CD4-positive, alpha-beta T cell (primary cell): ENCODE measurements at regions of chr9 and their contacts with region 1.

Region 1: DNA sequence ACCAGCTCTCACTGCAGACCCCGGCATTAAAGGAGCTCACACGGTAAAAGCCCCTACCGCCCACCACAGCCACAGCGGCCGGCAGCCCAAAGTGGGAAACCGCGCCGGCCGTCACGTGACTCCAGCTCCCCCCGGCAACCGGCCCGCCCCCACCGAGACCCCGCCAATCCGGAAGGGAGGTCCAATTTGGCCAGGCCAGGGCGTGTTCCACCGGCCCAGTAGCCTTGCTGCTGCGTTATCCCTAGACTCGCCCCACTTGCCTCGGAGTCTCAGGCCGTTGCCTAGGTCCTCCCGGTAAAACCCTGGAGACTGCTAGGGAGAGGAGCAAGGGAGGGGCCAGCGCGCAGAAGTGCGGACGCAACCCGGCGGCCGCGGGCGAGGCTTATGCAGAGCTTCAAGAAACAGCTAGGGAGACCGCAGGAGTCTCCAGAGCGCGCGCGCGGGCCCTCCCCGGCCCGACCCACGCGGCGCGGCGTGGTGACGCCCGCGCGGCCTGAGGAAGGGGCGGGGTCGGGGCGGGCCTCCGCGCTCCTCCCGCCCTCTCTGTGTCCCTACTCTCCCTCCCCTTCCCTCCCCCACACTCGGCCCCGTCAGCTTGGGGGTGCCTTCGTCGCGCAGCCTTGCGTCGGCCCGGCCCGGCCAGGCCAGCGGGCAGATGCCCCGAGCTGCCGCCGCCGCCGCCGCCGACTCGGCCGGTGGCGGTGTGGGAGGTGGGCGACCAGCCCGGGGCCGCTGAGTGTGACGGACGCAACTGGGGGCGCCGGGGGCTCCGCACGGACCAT is at the start of gene RIC1:
- DNase-seq: peak; percentile 74 to 96 (median 86)
- ATAC-seq: peak; percentile 79
- H3K4me3 ChIP-seq: peak within 1 kb of the TSS; percentile 88
- H3K4me3 Mint-ChIP-seq: peak within 1 kb of the TSS; percentile 99
- H3K27ac ChIP-seq: peak within 1 kb of the TSS; percentile 85
- H3K27ac Mint-ChIP-seq: peak within 1 kb of the TSS; percentile 97
- H3K4me1 ChIP-seq: peaks cover 42% of the 10 kb centered on the region
- H3K4me1 Mint-ChIP-seq: peaks cover 66% of the 10 kb centered on the region
- H3K27me3 ChIP-seq: no peaks in the 10 kb centered on the region
- H3K27me3 Mint-ChIP-seq: no peaks in the 10 kb centered on the region
- CTCF ChIP-seq: no peak
- total RNA-seq, gene RIC1: 24.7 to 26.3 TPM

Region 2: DNA sequence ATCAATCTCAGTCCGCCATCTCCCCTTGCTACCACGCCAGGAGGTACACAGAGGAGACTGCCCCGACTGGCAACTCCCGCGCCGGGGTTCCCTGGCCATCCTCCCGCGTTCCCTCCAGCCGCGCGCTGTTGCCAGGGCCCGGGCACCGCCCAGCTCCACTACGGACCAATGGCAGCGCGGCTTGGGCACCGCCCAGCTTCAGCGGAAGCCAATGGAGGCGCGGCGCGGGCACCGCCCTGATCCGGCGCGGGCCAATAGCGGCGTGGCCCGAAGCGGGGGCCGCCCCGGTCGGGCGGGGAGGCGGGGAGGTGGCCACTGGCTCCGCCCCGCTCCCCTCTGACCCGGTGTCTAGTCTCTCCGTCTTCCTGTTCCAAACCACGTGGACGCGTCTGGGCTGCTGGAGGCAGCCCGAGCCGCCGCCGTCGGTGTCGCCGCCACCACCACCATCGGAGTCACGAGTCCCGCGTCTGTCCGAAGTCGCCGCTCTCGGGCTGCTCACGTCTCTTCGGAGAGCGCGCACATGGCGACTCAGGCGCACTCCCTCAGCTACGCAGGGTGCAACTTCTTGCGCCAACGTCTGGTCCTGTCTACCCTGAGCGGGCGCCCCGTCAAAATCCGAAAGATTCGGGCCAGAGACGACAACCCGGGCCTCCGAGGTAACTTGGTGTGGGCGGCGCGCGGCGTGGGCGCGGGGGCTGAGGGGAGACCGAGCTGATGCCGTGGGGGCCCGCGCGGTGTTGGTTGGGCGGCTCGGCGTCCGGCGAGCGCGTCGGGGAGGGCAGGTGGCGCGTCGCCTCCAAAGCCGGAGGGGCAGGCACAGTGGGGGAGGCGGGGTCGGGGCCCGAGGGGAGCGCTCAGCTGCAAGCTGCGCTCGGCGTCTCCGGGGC is 835.9 kb before region 1 on chr9 and contains the start of gene RCL1:
- CTCF ChIA-PET with region 1: no interaction called
- POLR2A ChIA-PET with region 1: interaction called, 14 read pairs
- intact Hi-C with region 1: loop called in 1 of 2 experiments (anchors 5 kb)
- DNase-seq: peak; percentile 89 to 98 (median 94)
- ATAC-seq: peak; percentile 89
- H3K4me3 ChIP-seq: peak within 1 kb of the TSS; percentile 87
- H3K4me3 Mint-ChIP-seq: peak within 1 kb of the TSS; percentile 97
- H3K27ac ChIP-seq: peak within 1 kb of the TSS; percentile 83 to 87
- H3K27ac Mint-ChIP-seq: peak within 1 kb of the TSS; percentile 92
- H3K4me1 ChIP-seq: peaks cover 25% of the 10 kb centered on the region
- H3K4me1 Mint-ChIP-seq: peaks cover 45% of the 10 kb centered on the region
- H3K27me3 ChIP-seq: no peaks in the 10 kb centered on the region
- H3K27me3 Mint-ChIP-seq: no peaks in the 10 kb centered on the region
- CTCF ChIP-seq: no peak
- total RNA-seq, gene RCL1: 33.8 to 35.5 TPM

Region 3: GRCh38 chr9:5557606-5558587 is 70.8 kb before region 1 on chr9:
- CTCF ChIA-PET with region 1: no interaction called
- POLR2A ChIA-PET with region 1: interaction called, 26 read pairs
- intact Hi-C with region 1: no loop called
- DNase-seq: peak; percentile 28 to 86 (median 46)
- ATAC-seq: peak; percentile 97
- H3K4me3 ChIP-seq: no peak overlapping the region
- H3K4me3 Mint-ChIP-seq: peak overlapping the region; percentile 76
- H3K27ac ChIP-seq: peak overlapping the region; percentile 67 to 81
- H3K27ac Mint-ChIP-seq: peak overlapping the region; percentile 94
- H3K4me1 ChIP-seq: peaks cover 43% of the 10 kb centered on the region
- H3K4me1 Mint-ChIP-seq: peaks cover 66% of the 10 kb centered on the region
- H3K27me3 ChIP-seq: no peaks in the 10 kb centered on the region
- H3K27me3 Mint-ChIP-seq: no peaks in the 10 kb centered on the region
- CTCF ChIP-seq: no peak

Region 4: GRCh38 chr9:5608298-5609225 is 20.2 kb before region 1 on chr9:
- CTCF ChIA-PET with region 1: no interaction called
- POLR2A ChIA-PET with region 1: interaction called, 28 read pairs
- intact Hi-C with region 1: no loop called
- DNase-seq: peak in 3 of 14 experiments; percentile 17 to 26 (median 18)
- ATAC-seq: peak; percentile 62
- H3K4me3 ChIP-seq: peak overlapping the region; percentile 42
- H3K4me3 Mint-ChIP-seq: peak overlapping the region; percentile 83
- H3K27ac ChIP-seq: no peak overlapping the region
- H3K27ac Mint-ChIP-seq: peak overlapping the region; percentile 71
- H3K4me1 ChIP-seq: peaks cover 4% of the 10 kb centered on the region
- H3K4me1 Mint-ChIP-seq: peaks cover 39% of the 10 kb centered on the region
- H3K27me3 ChIP-seq: no peaks in the 10 kb centered on the region
- H3K27me3 Mint-ChIP-seq: no peaks in the 10 kb centered on the region
- CTCF ChIP-seq: no peak

Region 5: DNA sequence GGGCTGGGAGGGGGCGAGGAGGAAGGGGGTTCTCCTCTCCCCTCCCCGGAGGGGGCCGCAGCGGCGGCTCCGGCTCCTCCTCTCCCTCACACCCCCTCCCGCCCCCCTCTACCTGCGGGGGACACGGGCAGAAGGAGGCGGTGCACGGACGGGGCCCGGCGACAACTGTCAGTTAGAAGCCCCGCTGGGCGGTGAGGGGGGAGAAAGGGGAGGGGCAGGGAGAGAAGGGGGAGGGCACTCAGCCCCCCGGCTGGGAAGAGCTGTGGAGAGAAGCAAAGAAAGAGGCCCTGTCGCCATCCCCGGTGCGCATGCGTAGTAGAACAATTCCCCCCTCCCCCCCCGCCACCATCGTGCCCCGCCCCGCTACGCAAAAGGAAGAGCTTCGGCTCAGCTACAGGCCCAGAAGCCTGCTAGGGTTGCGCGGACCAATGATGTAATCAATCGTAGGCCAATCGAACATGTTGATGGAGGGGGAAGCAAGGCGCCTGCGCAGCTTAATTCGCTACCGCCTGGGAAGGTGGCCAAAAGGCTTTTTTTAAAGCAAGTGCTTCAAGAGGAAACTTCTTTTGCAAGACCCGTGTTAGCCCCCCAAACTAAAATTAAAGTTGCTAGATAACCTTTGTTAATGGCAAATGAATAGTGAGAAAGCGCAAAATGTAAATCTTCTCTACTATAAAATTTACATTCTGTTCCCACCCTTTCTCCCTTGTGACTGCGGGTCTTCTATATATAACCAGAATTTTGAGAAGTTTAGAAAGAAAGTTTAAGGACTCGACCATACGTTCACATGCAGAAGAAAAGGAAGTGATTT is 379.7 kb after region 1 on chr9:
- CTCF ChIA-PET with region 1: no interaction called
- POLR2A ChIA-PET with region 1: interaction called, 19 read pairs
- intact Hi-C with region 1: loop called (anchors 5 kb)
- DNase-seq: peak; percentile 88 to 99 (median 92)
- ATAC-seq: peak; percentile 70
- H3K4me3 ChIP-seq: peak overlapping the region; percentile 87
- H3K4me3 Mint-ChIP-seq: peak overlapping the region; percentile 91
- H3K27ac ChIP-seq: peak overlapping the region; percentile 91 to 95
- H3K27ac Mint-ChIP-seq: peak overlapping the region; percentile 97
- H3K4me1 ChIP-seq: peaks cover 11% of the 10 kb centered on the region
- H3K4me1 Mint-ChIP-seq: peaks cover 70% of the 10 kb centered on the region
- H3K27me3 ChIP-seq: no peaks in the 10 kb centered on the region
- H3K27me3 Mint-ChIP-seq: no peaks in the 10 kb centered on the region
- CTCF ChIP-seq: no peak

Region 6: GRCh38 chr9:6757456-6758247 is 1128.9 kb after region 1 on chr9 and contains the start of gene KDM4C:
- CTCF ChIA-PET with region 1: no interaction called
- POLR2A ChIA-PET with region 1: interaction called, 21 read pairs
- intact Hi-C with region 1: loop called in 1 of 2 experiments (anchors 10 kb)
- DNase-seq: peak; percentile 87 to 98 (median 94)
- ATAC-seq: peak; percentile 70
- H3K4me3 ChIP-seq: peak within 1 kb of the TSS; percentile 90
- H3K4me3 Mint-ChIP-seq: peak within 1 kb of the TSS; percentile 96
- H3K27ac ChIP-seq: peak within 1 kb of the TSS; percentile 96 to 99
- H3K27ac Mint-ChIP-seq: peak within 1 kb of the TSS; percentile 96
- H3K4me1 ChIP-seq: peaks cover 26% of the 10 kb centered on the region
- H3K4me1 Mint-ChIP-seq: peaks cover 25% of the 10 kb centered on the region
- H3K27me3 ChIP-seq: no peaks in the 10 kb centered on the region
- H3K27me3 Mint-ChIP-seq: no peaks in the 10 kb centered on the region
- CTCF ChIP-seq: no peak
- total RNA-seq, gene KDM4C: 60.1 to 61.3 TPM